ENCODE measurements at regions of chr22 and their contacts with region 1.

Region 1: GRCh38 chr22:42437488-42438292 is 5.5 kb upstream of the NFAM1 start:
- DNase-seq: peak in 1 of 2 experiments; percentile 73
- H3K4me3 ChIP-seq: peak overlapping the region; percentile 55
- H3K27ac ChIP-seq: no peak overlapping the region
- H3K4me1 ChIP-seq: peaks cover 24% of the 10 kb centered on the region
- H3K27me3 ChIP-seq: peaks cover 17% of the 10 kb centered on the region
- CTCF ChIP-seq: peak; percentile 100

Region 2: GRCh38 chr22:41966607-41967240 is 471.0 kb before region 1 on chr22:
- CTCF ChIA-PET with region 1: interaction called, 5 read pairs
- POLR2A ChIA-PET with region 1: no interaction called
- intact Hi-C with region 1: loop called (anchors 1 kb)
- DNase-seq: peak; percentile 59 to 80
- H3K4me3 ChIP-seq: no peak overlapping the region
- H3K27ac ChIP-seq: no peak overlapping the region
- H3K4me1 ChIP-seq: no peaks in the 10 kb centered on the region
- H3K27me3 ChIP-seq: peaks cover 8% of the 10 kb centered on the region; the same call in 1 of the 2 replicates
- CTCF ChIP-seq: peak; percentile 73

Region 3: GRCh38 chr22:42169055-42169469 is 268.6 kb before region 1 on chr22:
- CTCF ChIA-PET with region 1: interaction called, 9 read pairs
- POLR2A ChIA-PET with region 1: no interaction called
- intact Hi-C with region 1: loop called (anchors 1 kb)
- DNase-seq: peak in 1 of 2 experiments; percentile 56
- H3K4me3 ChIP-seq: no peak overlapping the region
- H3K27ac ChIP-seq: no peak overlapping the region
- H3K4me1 ChIP-seq: no peaks in the 10 kb centered on the region
- H3K27me3 ChIP-seq: no peaks in the 10 kb centered on the region
- CTCF ChIP-seq: peak; percentile 93

Region 4: GRCh38 chr22:42270512-42271417 is 166.9 kb before region 1 on chr22 and contains the start of gene TCF20:
- CTCF ChIA-PET with region 1: interaction called, 3 read pairs
- POLR2A ChIA-PET with region 1: no interaction called
- intact Hi-C with region 1: loop called (anchors 5 kb)
- DNase-seq: peak; percentile 51 to 69
- H3K4me3 ChIP-seq: peak within 1 kb of the TSS; percentile 97
- H3K27ac ChIP-seq: peak within 1 kb of the TSS; percentile 82
- H3K4me1 ChIP-seq: peaks cover 18% of the 10 kb centered on the region
- H3K27me3 ChIP-seq: no peaks in the 10 kb centered on the region
- CTCF ChIP-seq: no peak
- total RNA-seq, gene TCF20: 79.1 and 85.1 TPM in 2 replicates

Region 5: GRCh38 chr22:42282252-42282942 is 155.3 kb before region 1 on chr22:
- CTCF ChIA-PET with region 1: interaction called, 4 read pairs
- POLR2A ChIA-PET with region 1: interaction called, 14 read pairs
- intact Hi-C with region 1: no loop called
- DNase-seq: no peak
- H3K4me3 ChIP-seq: no peak overlapping the region
- H3K27ac ChIP-seq: no peak overlapping the region
- H3K4me1 ChIP-seq: no peaks in the 10 kb centered on the region
- H3K27me3 ChIP-seq: no peaks in the 10 kb centered on the region
- CTCF ChIP-seq: no peak

Region 6: DNA sequence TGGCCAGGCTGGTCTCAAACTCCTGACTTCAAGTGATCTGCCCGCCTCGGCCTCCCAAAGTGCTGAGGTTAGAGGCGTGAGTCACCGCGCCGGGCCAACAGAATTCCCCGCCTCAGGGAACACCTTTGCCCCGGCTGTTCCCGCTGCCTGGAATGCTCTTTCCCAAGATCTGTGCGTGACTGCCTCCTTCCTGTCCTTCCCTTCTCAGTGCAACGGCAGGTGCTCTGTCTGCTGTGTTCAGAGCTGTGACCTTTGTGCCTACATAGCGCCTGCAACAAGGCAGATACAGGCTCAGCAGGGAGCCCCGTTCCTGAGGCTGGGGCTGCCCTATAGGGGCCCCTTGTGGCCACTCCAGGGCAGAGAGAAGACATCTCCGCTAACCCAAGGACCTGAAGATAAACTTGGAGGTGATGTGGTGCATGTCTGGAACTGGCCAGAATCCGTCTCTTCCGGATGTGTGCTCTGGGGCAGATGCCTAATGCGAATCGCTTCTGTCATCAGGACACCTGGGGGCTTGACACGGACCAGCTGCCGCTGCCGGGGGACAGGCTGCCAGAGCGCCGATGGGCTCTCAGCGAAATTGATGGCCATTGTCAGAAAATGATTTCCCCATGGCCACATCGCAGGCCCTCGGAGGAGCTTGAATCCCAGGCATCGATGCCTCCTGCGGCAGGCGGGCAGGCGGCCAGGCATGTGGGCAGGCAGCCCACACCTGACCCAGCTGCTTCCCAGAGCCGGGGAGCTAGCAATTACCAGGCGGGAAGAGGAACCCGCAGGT is 123.7 kb before region 1 on chr22:
- CTCF ChIA-PET with region 1: no interaction called
- POLR2A ChIA-PET with region 1: no interaction called
- intact Hi-C with region 1: loop called (anchors 10 kb)
- DNase-seq: peak; percentile 85 to 96
- H3K4me3 ChIP-seq: no peak overlapping the region
- H3K27ac ChIP-seq: peak overlapping the region; percentile 41
- H3K4me1 ChIP-seq: peaks cover 37% of the 10 kb centered on the region
- H3K27me3 ChIP-seq: no peaks in the 10 kb centered on the region
- CTCF ChIP-seq: peak; percentile 87

Region 7: GRCh38 chr22:42328130-42328783 is 109.4 kb before region 1 on chr22:
- CTCF ChIA-PET with region 1: interaction called, 10 read pairs
- POLR2A ChIA-PET with region 1: no interaction called
- intact Hi-C with region 1: no loop called
- DNase-seq: no peak
- H3K4me3 ChIP-seq: no peak overlapping the region
- H3K27ac ChIP-seq: no peak overlapping the region
- H3K4me1 ChIP-seq: no peaks in the 10 kb centered on the region; the same call in 1 of the 2 replicates
- H3K27me3 ChIP-seq: no peaks in the 10 kb centered on the region
- CTCF ChIP-seq: no peak

Region 8: GRCh38 chr22:42473484-42474193 is 35.9 kb after region 1 on chr22:
- CTCF ChIA-PET with region 1: no interaction called
- POLR2A ChIA-PET with region 1: no interaction called
- intact Hi-C with region 1: no loop called
- DNase-seq: peak; percentile 22 to 64
- H3K4me3 ChIP-seq: no peak overlapping the region
- H3K27ac ChIP-seq: no peak overlapping the region
- H3K4me1 ChIP-seq: no peaks in the 10 kb centered on the region
- H3K27me3 ChIP-seq: peaks cover 1% of the 10 kb centered on the region; the same call in 1 of the 2 replicates
- CTCF ChIP-seq: peak; percentile 86

Region 9: DNA sequence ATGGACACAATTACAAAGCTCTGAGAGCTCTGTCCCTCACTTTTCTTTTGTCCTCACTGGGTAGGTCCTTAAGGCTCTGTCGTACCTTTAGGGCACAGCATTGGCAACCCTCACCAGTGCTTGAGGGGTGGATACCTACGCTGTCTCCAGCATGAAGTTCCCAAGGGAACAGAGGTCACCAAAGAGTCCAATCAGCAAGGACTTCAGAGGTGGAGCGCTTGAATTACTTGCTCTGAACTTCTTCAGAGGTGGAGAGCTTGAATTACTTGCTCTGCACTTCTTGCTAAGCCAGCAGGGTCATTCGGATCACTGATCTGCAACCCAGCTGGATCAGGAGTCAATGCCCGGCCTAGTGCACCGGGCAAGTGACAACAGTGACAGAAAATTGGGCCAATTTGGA is 46.8 kb after region 1 on chr22:
- CTCF ChIA-PET with region 1: no interaction called
- POLR2A ChIA-PET with region 1: no interaction called
- intact Hi-C with region 1: no loop called
- DNase-seq: no peak
- H3K4me3 ChIP-seq: no peak overlapping the region
- H3K27ac ChIP-seq: no peak overlapping the region
- H3K4me1 ChIP-seq: no peaks in the 10 kb centered on the region
- H3K27me3 ChIP-seq: peaks cover 22% of the 10 kb centered on the region
- CTCF ChIP-seq: no peak